ENCODE measurements at regions of chr19 and their contacts with region 1.

Region 1: DNA sequence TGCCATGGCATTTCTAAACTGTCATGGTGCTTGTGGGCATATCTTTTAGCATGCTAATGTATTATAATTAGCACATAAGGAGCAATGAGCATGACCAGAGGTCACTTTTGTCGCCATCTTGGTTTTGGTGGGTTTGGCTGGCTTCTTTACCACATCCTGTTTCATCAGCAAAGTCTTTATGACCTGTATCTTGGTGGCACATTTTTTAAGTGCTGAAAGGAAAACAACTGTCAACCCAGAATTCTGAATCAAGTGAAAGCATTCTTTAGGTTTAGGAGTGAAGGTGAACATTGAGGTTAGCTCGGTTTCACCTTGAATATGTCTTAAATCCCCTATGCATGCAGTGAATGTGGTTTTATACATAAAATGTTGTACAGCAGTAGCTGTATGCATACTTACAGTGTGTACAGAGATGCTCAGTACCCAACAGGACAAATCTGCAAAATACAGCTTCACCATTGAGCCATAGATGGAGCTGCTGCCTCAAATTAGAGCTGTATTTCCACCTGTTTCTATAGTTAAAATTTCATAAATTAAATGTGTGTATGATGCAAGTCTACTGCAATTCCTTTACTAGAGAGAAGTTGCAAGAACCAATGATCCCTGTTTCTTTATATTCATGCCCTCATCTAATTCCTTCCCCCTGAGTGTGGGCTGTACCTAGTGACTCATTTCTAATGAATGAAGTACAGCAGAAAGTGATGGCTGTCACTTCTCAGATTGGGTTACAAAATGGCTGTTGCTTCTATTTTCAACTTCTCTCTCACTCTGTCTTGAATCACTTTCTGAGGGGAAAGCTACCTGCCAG is 25.2 kb upstream of the IGSF23 start:
- DNase-seq: peak; percentile 84 to 85
- ATAC-seq: peak; percentile 85 to 96
- H3K4me3 ChIP-seq: peak overlapping the region; percentile 13; the same call in 1 of the 3 replicates
- H3K27ac ChIP-seq: peak overlapping the region; percentile 90 to 94
- H3K4me1 ChIP-seq: peaks cover 75% of the 10 kb centered on the region
- CTCF ChIP-seq: peak; percentile 83
- EP300 ChIP-seq: peak; percentile 71 to 81; a peak in 3 of 5 replicates
- POLR2A ChIP-seq: no peak
- RAD21 ChIP-seq: peak; percentile 71 to 93

Region 2: DNA sequence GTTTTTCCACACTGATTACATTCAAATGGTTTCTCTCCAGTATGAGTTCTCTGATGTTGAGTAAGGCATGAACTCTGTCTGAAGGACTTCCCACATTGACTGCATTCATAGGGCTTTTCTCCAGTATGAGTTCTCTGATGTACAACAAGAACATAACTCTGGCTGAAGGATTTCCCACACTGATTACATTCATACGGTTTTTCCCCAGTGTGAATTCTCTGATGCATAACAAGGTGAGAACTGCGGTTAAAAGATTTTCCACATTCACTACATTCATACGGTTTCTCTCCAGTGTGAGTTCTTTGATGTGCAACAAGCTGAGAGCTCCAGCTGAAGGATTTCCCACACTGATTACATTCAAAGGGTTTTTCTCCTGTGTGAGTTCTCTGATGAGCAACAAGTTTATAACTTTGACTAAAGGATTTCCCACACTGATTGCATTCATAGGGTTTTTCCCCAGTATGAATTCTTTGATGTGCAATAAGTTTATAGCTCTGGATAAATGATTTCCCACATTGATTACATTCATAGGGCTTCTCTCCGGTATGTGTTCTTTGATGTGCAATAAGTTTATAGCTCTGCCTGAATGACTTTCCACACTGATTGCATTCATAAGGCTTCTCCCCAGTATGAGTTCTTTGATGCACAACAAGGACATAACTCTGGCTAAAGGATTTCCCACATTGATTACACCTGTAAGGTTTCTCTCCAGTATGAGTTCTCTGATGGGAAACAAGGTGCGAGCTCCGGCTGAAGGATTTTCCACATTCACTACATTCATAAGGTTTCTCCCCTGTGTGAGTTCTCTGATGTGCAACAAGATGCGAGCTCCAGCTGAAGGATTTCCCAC is 111.4 kb before region 1 on chr19:
- CTCF ChIA-PET with region 1: no interaction called
- POLR2A ChIA-PET with region 1: no interaction called
- DNase-seq: peak in 1 of 2 experiments; percentile 66
- ATAC-seq: no peak
- H3K4me3 ChIP-seq: no peak overlapping the region
- H3K27ac ChIP-seq: no peak overlapping the region
- H3K4me1 ChIP-seq: no peaks in the 10 kb centered on the region
- CTCF ChIP-seq: no peak
- EP300 ChIP-seq: no peak
- POLR2A ChIP-seq: no peak
- RAD21 ChIP-seq: no peak

Region 3: GRCh38 chr19:44643605-44644401 is 55.6 kb after region 1 on chr19 and contains the start of gene PVR:
- CTCF ChIA-PET with region 1: interaction called, 14 read pairs
- POLR2A ChIA-PET with region 1: interaction called, 21 read pairs
- DNase-seq: peak; percentile 91 to 98
- ATAC-seq: peak; percentile 86 to 90
- H3K4me3 ChIP-seq: peak within 1 kb of the TSS; percentile 61
- H3K27ac ChIP-seq: peak within 1 kb of the TSS; percentile 91 to 97
- H3K4me1 ChIP-seq: peaks cover 75% of the 10 kb centered on the region
- CTCF ChIP-seq: no peak
- EP300 ChIP-seq: peak in 1 of 2 experiments; percentile 51; a peak in 1 of 5 replicates
- POLR2A ChIP-seq: peak; percentile 72
- RAD21 ChIP-seq: no peak; a peak in 1 of 5 replicates
- polyA plus RNA-seq, gene PVR: 108 and 110 TPM in 2 replicates

Region 4: GRCh38 chr19:44662691-44663385 is 74.7 kb after region 1 on chr19:
- CTCF ChIA-PET with region 1: interaction called, 107 read pairs
- POLR2A ChIA-PET with region 1: interaction called, 4 read pairs
- DNase-seq: no peak
- ATAC-seq: no peak
- H3K4me3 ChIP-seq: no peak overlapping the region
- H3K27ac ChIP-seq: peak overlapping the region in 1 of 2 experiments; percentile 40; a peak in 2 of 6 replicates
- H3K4me1 ChIP-seq: peaks cover 18% of the 10 kb centered on the region; the same call in 1 of the 3 replicates
- CTCF ChIP-seq: no peak
- EP300 ChIP-seq: no peak
- POLR2A ChIP-seq: no peak
- RAD21 ChIP-seq: no peak

Region 5: GRCh38 chr19:44677019-44677821 is 89.1 kb after region 1 on chr19:
- CTCF ChIA-PET with region 1: no interaction called
- POLR2A ChIA-PET with region 1: no interaction called
- DNase-seq: peak; percentile 89 to 90
- ATAC-seq: peak; percentile 62 to 86
- H3K4me3 ChIP-seq: no peak overlapping the region
- H3K27ac ChIP-seq: peak overlapping the region; percentile 61 to 86
- H3K4me1 ChIP-seq: peaks cover 34% of the 10 kb centered on the region
- CTCF ChIP-seq: no peak
- EP300 ChIP-seq: no peak
- POLR2A ChIP-seq: no peak
- RAD21 ChIP-seq: no peak

Measured in A549 (cell line).